Aorta (tissue), 5 donors: ENCODE measurements at regions of chr12 and their contacts with region 1.

Region 1: GRCh38 chr12:118372541-118373495 is at the start of gene TAOK3:
- DNase-seq: peak; percentile 99
- ATAC-seq: peak; percentile 98
- H3K4me3 ChIP-seq: peak within 1 kb of the TSS; percentile 73 to 95
- H3K27ac ChIP-seq: peak within 1 kb of the TSS in 1 of 2 donors; percentile 69
- H3K4me1 ChIP-seq: no peaks in the 10 kb centered on the region
- H3K27me3 ChIP-seq: no peaks in the 10 kb centered on the region
- total RNA-seq, gene TAOK3: 31.1 to 45.4 TPM

Region 2: DNA sequence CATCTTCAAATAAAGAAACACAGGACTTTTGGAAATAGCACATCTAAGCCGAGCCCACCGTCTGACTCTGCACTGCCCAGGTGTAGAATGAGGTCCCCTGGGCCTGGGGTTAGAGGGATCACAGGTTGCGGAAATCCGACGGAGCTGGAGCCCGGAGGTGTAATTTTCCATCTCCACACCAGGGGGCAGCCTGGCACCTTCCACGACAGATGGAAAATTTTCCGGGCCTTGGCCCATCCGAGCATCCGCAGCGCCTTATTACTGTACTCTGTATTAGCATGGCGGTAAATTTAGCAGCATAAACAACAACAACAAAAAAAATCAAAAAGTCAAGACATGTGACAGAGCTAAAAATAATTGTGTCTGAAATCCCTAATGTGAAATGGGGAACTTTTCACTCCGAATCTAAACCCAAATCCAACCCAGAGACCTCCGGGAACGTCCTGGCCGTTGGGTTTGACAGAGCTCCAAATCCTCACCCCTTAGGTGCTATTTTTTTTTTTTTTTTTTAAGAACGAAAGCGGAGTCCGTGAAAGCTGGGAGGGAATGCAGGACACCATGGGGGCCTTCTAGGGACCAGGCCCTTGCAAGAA is 497.9 kb before region 1 on chr12:
- intact Hi-C with region 1: loop called (anchors 10 kb)
- DNase-seq: peak; percentile 77 to 90
- ATAC-seq: peak; percentile 82
- H3K4me3 ChIP-seq: no peak overlapping the region
- H3K27ac ChIP-seq: no peak overlapping the region
- H3K4me1 ChIP-seq: no peaks in the 10 kb centered on the region
- H3K27me3 ChIP-seq: no peaks in the 10 kb centered on the region

Region 3: DNA sequence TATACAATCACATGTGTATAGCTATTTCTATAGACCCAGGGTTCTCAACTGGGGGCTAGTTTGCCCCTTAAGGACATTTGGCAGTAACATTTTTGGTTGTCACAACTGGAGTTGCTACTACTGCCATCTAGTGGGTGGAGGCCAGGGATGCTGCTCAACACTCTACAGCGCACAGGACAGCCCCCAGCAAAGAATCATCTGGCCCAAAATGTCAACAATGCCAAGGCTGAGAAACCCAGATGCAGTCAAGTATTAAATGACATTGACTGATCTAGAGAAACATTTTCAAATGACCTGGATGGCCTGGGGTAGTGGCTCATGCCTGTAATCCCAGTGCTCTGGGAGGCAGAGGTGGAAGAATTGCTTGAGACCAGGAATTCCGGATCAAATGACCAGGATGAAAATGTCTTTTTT is 317.7 kb before region 1 on chr12:
- intact Hi-C with region 1: loop called in 1 of 2 experiments (anchors 10 kb)
- DNase-seq: peak; percentile 59 to 73
- ATAC-seq: no peak
- H3K4me3 ChIP-seq: no peak overlapping the region
- H3K27ac ChIP-seq: peak overlapping the region in 1 of 2 donors; percentile 66
- H3K4me1 ChIP-seq: peaks cover 0 to 2% of the 10 kb centered on the region in 2 donors
- H3K27me3 ChIP-seq: no peaks in the 10 kb centered on the region

Region 4: GRCh38 chr12:118135788-118136558 is 236.8 kb before region 1 on chr12 and contains the start of gene PEBP1:
- intact Hi-C with region 1: loop called in 1 of 2 experiments (anchors 10 kb)
- DNase-seq: peak; percentile 97 to 99
- ATAC-seq: peak; percentile 99
- H3K4me3 ChIP-seq: peak within 1 kb of the TSS; percentile 72 to 77
- H3K27ac ChIP-seq: peak within 1 kb of the TSS in 1 of 2 donors; percentile 60
- H3K4me1 ChIP-seq: no peaks in the 10 kb centered on the region
- H3K27me3 ChIP-seq: no peaks in the 10 kb centered on the region
- total RNA-seq, gene PEBP1: 122 to 155 TPM

Region 5: GRCh38 chr12:118183705-118184104 is 189.1 kb before region 1 on chr12:
- intact Hi-C with region 1: loop called (anchors 5 kb)
- DNase-seq: no peak
- ATAC-seq: no peak
- H3K4me3 ChIP-seq: no peak overlapping the region
- H3K27ac ChIP-seq: no peak overlapping the region
- H3K4me1 ChIP-seq: peaks cover 0 to 3% of the 10 kb centered on the region in 2 donors
- H3K27me3 ChIP-seq: no peaks in the 10 kb centered on the region

Region 6: GRCh38 chr12:118271790-118272417 is 100.9 kb before region 1 on chr12:
- intact Hi-C with region 1: no loop called
- DNase-seq: no peak
- ATAC-seq: no peak
- H3K4me3 ChIP-seq: no peak overlapping the region
- H3K27ac ChIP-seq: no peak overlapping the region
- H3K4me1 ChIP-seq: no peaks in the 10 kb centered on the region
- H3K27me3 ChIP-seq: no peaks in the 10 kb centered on the region

Region 7: GRCh38 chr12:118357257-118358007 is 15.4 kb before region 1 on chr12:
- intact Hi-C with region 1: no loop called
- DNase-seq: no peak
- ATAC-seq: no peak
- H3K4me3 ChIP-seq: no peak overlapping the region
- H3K27ac ChIP-seq: no peak overlapping the region
- H3K4me1 ChIP-seq: no peaks in the 10 kb centered on the region
- H3K27me3 ChIP-seq: no peaks in the 10 kb centered on the region